PC-3 (cell line): ENCODE measurements at regions of chr15 and their contacts with region 1.

Region 1: GRCh38 chr15:25438601-25439368 is at the start of gene UBE3A:
- DNase-seq: peak; percentile 94
- ATAC-seq: peak; percentile 93
- H3K4me3 ChIP-seq: peak within 1 kb of the TSS; percentile 91
- H3K27ac ChIP-seq: peak within 1 kb of the TSS; percentile 72
- H3K4me1 ChIP-seq: peaks cover 31% of the 10 kb centered on the region
- H3K27me3 ChIP-seq: no peaks in the 10 kb centered on the region
- CTCF ChIP-seq: no peak; the same call in none of the 2 replicates
- total RNA-seq, gene UBE3A: 59.5 and 61.2 TPM in 2 replicates

Region 2: DNA sequence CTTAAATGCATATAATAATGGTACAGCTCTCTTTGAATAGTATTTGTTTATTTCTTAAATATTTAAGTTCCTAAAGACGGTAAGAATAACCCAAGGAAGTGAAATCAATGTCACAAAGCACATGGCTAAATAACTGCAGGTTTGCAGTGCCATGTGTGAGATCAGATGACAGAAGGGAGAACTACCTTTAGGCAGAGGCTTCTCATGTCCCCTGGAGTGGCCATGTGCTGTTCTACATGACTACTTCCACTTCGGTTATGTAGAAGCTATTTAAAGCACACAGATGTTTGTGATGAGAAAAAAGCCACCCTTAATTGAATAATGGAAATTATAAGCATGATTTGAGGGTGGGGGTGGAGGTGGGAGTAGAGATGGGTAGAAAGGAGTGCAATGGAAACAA is 109.1 kb before region 1 on chr15:
- CTCF ChIA-PET with region 1: no interaction called
- POLR2A ChIA-PET with region 1: no interaction called
- intact Hi-C with region 1: loop called (anchors 5 kb)
- DNase-seq: no peak
- ATAC-seq: no peak
- H3K4me3 ChIP-seq: no peak overlapping the region
- H3K27ac ChIP-seq: no peak overlapping the region
- H3K4me1 ChIP-seq: no peaks in the 10 kb centered on the region
- H3K27me3 ChIP-seq: no peaks in the 10 kb centered on the region
- CTCF ChIP-seq: no peak

Region 3: GRCh38 chr15:25345943-25346342 is 92.8 kb before region 1 on chr15:
- CTCF ChIA-PET with region 1: no interaction called
- POLR2A ChIA-PET with region 1: no interaction called
- intact Hi-C with region 1: loop called (anchors 5 kb)
- DNase-seq: no peak
- ATAC-seq: peak; percentile 78
- H3K4me3 ChIP-seq: no peak overlapping the region
- H3K27ac ChIP-seq: no peak overlapping the region
- H3K4me1 ChIP-seq: no peaks in the 10 kb centered on the region
- H3K27me3 ChIP-seq: no peaks in the 10 kb centered on the region
- CTCF ChIP-seq: peak; percentile 44

Region 4: DNA sequence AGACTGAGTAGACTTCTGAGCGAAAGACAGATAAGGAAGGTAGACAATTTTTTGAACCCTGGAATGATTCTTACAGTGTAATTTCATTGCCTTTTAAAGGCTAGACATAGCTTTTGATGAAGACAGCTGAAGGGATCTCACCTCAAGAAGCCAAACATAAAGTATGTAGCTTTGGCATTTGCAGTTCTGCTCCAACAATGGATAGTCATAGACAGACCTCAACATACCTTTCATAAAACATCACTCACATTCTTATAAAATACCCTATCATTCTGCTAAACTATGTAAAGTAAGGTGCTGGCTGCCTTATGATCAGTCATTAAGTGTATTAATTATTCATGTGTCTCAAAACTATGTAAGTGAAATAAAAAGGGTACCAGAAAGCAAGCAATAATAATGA is 69.9 kb before region 1 on chr15:
- CTCF ChIA-PET with region 1: no interaction called
- POLR2A ChIA-PET with region 1: no interaction called
- intact Hi-C with region 1: loop called (anchors 1 kb)
- DNase-seq: no peak
- ATAC-seq: no peak
- H3K4me3 ChIP-seq: no peak overlapping the region
- H3K27ac ChIP-seq: no peak overlapping the region
- H3K4me1 ChIP-seq: peaks cover 12% of the 10 kb centered on the region
- H3K27me3 ChIP-seq: no peaks in the 10 kb centered on the region
- CTCF ChIP-seq: no peak

Region 5: GRCh38 chr15:25391971-25392721 is 46.6 kb before region 1 on chr15:
- CTCF ChIA-PET with region 1: no interaction called
- POLR2A ChIA-PET with region 1: interaction called, 3 read pairs
- intact Hi-C with region 1: loop called (anchors 5 kb)
- DNase-seq: peak; percentile 54
- ATAC-seq: peak; percentile 70
- H3K4me3 ChIP-seq: no peak overlapping the region
- H3K27ac ChIP-seq: peak overlapping the region; percentile 24
- H3K4me1 ChIP-seq: peaks cover 12% of the 10 kb centered on the region; the same call in 1 of the 2 replicates
- H3K27me3 ChIP-seq: no peaks in the 10 kb centered on the region
- CTCF ChIP-seq: no peak

Region 6: DNA sequence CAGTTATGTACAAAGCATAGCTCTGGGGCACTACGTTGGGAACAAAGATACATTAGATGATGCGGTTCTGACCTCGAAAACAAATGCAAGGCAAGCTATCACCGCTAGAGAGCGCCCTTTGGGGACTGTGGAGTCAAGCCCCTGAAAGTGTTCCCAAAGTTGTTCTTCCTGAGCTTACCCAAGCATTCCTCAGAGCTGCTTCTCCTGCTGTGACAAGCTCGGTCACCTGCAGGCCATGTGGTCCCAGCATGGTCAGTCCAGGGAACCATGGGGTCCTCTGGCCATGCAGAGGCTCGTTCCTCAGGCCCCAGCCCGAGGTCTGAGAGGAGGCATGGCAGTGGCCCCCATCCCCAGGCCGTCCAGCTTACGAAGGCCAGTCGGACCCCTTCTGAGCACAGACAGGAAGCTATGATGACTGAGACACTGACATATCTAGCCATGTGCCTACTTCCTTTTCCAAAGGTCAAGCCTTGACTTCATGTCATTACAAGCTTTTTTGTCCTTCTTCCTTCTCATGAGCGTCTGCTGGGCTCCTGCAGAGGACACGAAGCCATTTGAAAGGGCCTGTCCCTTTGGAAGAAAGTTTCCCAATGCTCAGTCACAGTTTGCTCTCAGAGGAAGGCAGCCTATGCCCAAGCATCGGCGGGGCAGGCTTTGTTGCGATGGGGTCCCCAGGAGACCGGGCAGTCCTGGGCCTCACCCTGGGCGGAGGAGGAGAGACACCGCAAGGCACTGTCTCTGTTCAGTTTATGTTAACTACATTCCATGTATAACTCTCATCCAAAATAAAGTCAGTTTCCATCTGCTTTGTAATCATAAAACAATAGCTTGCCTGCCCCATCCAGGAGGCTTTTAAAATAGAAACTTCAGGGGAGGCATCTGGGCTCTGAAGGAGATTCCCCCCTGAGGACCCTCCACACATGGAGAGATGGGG is 345.1 kb after region 1 on chr15:
- CTCF ChIA-PET with region 1: interaction called, 13 read pairs
- POLR2A ChIA-PET with region 1: no interaction called
- intact Hi-C with region 1: no loop called
- DNase-seq: peak; percentile 28
- ATAC-seq: no peak
- H3K4me3 ChIP-seq: no peak overlapping the region
- H3K27ac ChIP-seq: no peak overlapping the region
- H3K4me1 ChIP-seq: no peaks in the 10 kb centered on the region
- H3K27me3 ChIP-seq: no peaks in the 10 kb centered on the region
- CTCF ChIP-seq: peak; percentile 49